Vagina (tissue), 2 donors: ENCODE measurements at regions of chr6 and their contacts with region 1.

Region 1: DNA sequence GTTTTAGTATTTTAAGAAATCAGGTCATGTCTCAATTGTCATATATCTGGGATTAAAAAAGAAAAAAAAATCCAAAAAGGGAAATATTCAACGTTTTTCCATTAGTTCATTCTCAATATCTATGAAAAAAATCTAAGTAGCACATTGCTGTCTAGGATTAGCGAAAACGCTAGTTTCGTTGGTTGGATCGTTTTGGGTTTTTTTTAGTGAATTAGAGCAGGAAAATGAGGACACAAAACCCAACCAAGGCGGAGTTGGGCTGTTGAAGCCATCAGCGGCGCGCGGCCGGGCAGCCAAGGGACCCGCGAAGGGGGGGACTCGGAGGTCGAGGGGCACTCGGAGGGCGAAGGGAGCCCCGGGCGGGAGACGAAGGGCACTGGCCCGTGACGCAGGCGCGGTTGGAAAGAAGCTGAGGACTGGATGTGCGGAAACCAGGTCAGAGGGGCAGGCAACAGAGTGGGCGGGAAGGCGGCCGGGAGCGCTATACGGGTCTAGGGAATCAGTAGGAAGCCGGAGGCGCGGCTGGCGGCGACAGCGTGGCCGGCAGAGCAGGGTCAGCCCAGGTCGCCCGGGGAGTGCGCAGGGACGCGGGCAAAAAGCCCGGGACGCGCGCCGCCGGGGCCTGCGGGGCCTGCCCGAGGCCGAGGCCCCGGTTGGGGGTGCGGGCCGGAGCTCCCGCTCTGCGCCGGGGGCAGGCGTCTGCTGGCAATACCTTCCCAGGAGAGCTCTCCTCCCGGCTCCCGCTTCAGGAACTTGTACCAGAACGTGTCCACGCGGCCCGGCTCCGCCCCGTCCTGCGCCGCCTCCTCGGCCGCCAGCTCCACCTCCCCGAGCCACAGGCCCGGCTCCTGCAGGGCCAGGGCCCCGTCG is 599 bp downstream of the EPM2A start:
- DNase-seq: peak in 1 of 2 donors; percentile 91
- H3K4me3 ChIP-seq: peak overlapping the region; percentile 74 to 80
- H3K27ac ChIP-seq: peak overlapping the region; percentile 95
- H3K4me1 ChIP-seq: peaks cover 10% of the 10 kb centered on the region
- H3K27me3 ChIP-seq: no peaks in the 10 kb centered on the region
- CTCF ChIP-seq: no peak
- POLR2A ChIP-seq: no peak

Region 2: DNA sequence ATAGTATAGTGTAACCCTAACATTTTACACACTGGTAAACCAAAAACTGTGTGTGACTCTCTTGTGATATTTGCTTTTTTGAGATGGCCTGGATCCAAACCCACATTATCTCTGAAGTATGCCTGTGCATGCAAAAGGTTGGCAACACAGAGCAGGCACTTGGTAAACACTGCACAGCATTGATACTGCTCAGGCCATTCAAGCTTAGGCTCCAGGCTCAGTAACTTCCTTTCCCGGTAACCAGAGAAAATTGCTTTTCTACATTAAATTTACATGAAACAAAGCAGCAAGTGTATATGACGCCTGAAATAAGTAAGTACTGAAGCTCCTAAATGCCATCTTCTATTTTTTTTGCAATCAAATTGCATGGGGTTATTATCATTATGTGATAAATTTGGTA is 205.1 kb before region 1 on chr6:
- intact Hi-C with region 1: no loop called
- DNase-seq: no peak
- H3K4me3 ChIP-seq: no peak overlapping the region
- H3K27ac ChIP-seq: no peak overlapping the region
- H3K4me1 ChIP-seq: no peaks in the 10 kb centered on the region
- H3K27me3 ChIP-seq: no peaks in the 10 kb centered on the region
- CTCF ChIP-seq: no peak
- POLR2A ChIP-seq: no peak

Region 3: GRCh38 chr6:145814501-145815308 is 80.0 kb after region 1 on chr6 and contains the start of gene FBXO30:
- intact Hi-C with region 1: loop called (anchors 10 kb)
- DNase-seq: peak in 1 of 2 donors; percentile 93
- H3K4me3 ChIP-seq: peak within 1 kb of the TSS; percentile 60
- H3K27ac ChIP-seq: peak within 1 kb of the TSS; percentile 83
- H3K4me1 ChIP-seq: peaks cover 44% of the 10 kb centered on the region
- H3K27me3 ChIP-seq: no peaks in the 10 kb centered on the region
- CTCF ChIP-seq: peak in 1 of 3 experiments; percentile 35
- POLR2A ChIP-seq: peak in 1 of 2 donors; percentile 75
- total RNA-seq, gene FBXO30: 9.1 TPM